HEK293 (cell line): ENCODE measurements at regions of chr17 and their contacts with region 1.

Region 1: GRCh38 chr17:75173526-75173925 is 9.2 kb downstream of the SUMO2 start:
- H3K4me3 ChIP-seq: no peak overlapping the region
- H3K27ac ChIP-seq: no peak overlapping the region; the same call in 1 of the 2 replicates
- H3K4me1 ChIP-seq: no peaks in the 10 kb centered on the region
- CTCF ChIP-seq: no peak

Region 2: GRCh38 chr17:75116737-75117136 is 56.8 kb before region 1 on chr17:
- CTCF ChIA-PET with region 1: interaction called, 103 read pairs
- POLR2A ChIA-PET with region 1: interaction called, 10 read pairs
- H3K4me3 ChIP-seq: no peak overlapping the region
- H3K27ac ChIP-seq: no peak overlapping the region
- H3K4me1 ChIP-seq: peaks cover 4% of the 10 kb centered on the region; the same call in 1 of the 2 replicates
- CTCF ChIP-seq: no peak

Region 3: GRCh38 chr17:75147878-75148546 is 25.5 kb before region 1 on chr17:
- CTCF ChIA-PET with region 1: interaction called, 19 read pairs
- POLR2A ChIA-PET with region 1: no interaction called
- H3K4me3 ChIP-seq: no peak overlapping the region
- H3K27ac ChIP-seq: no peak overlapping the region
- H3K4me1 ChIP-seq: peaks cover 4% of the 10 kb centered on the region; the same call in 1 of the 2 replicates
- CTCF ChIP-seq: no peak

Region 4: GRCh38 chr17:75154195-75155106 is 19.1 kb before region 1 on chr17 and contains the start of gene JPT1:
- CTCF ChIA-PET with region 1: interaction called, 21 read pairs
- POLR2A ChIA-PET with region 1: interaction called, 39 read pairs
- H3K4me3 ChIP-seq: peak within 1 kb of the TSS; percentile 90
- H3K27ac ChIP-seq: peak within 1 kb of the TSS; percentile 92
- H3K4me1 ChIP-seq: peaks cover 9% of the 10 kb centered on the region; the same call in 1 of the 2 replicates
- CTCF ChIP-seq: peak; percentile 11; the same call in 1 of the 2 replicates

Region 5: GRCh38 chr17:75199886-75200618 is 26.5 kb after region 1 on chr17:
- CTCF ChIA-PET with region 1: interaction called, 28 read pairs
- POLR2A ChIA-PET with region 1: interaction called, 5 read pairs
- H3K4me3 ChIP-seq: no peak overlapping the region
- H3K27ac ChIP-seq: no peak overlapping the region
- H3K4me1 ChIP-seq: no peaks in the 10 kb centered on the region
- CTCF ChIP-seq: no peak

Region 6: GRCh38 chr17:75218131-75218530 is 44.6 kb after region 1 on chr17:
- CTCF ChIA-PET with region 1: no interaction called
- POLR2A ChIA-PET with region 1: no interaction called
- H3K4me3 ChIP-seq: no peak overlapping the region
- H3K27ac ChIP-seq: no peak overlapping the region
- H3K4me1 ChIP-seq: no peaks in the 10 kb centered on the region
- CTCF ChIP-seq: no peak

Region 7: GRCh38 chr17:75364078-75364477 is 190.6 kb after region 1 on chr17:
- CTCF ChIA-PET with region 1: no interaction called
- POLR2A ChIA-PET with region 1: no interaction called
- H3K4me3 ChIP-seq: no peak overlapping the region
- H3K27ac ChIP-seq: no peak overlapping the region
- H3K4me1 ChIP-seq: peaks cover 59% of the 10 kb centered on the region
- CTCF ChIP-seq: no peak